Activated CD4-positive, alpha-beta memory T cell treated with anti-CD3 and anti-CD28 coated beads for 36 hours (primary cell): ENCODE measurements at regions of chr5 and their contacts with region 1.

Region 1: GRCh38 chr5:181191529-181192394 is 13.2 kb downstream of the TRIM7 start:
- DNase-seq: peak; percentile 98
- H3K4me3 Mint-ChIP-seq: peak overlapping the region; percentile 80
- H3K27ac Mint-ChIP-seq: peak overlapping the region; percentile 87
- H3K4me1 Mint-ChIP-seq: peaks cover 31% of the 10 kb centered on the region
- H3K27me3 Mint-ChIP-seq: peaks cover 11% of the 10 kb centered on the region

Region 2: GRCh38 chr5:180810210-180810958 is 381.4 kb before region 1 on chr5:
- CTCF ChIA-PET with region 1: no interaction called
- POLR2A ChIA-PET with region 1: no interaction called
- intact Hi-C with region 1: loop called (anchors 1 kb)
- DNase-seq: peak; percentile 97
- H3K4me3 Mint-ChIP-seq: peak overlapping the region; percentile 94
- H3K27ac Mint-ChIP-seq: peak overlapping the region; percentile 99
- H3K4me1 Mint-ChIP-seq: peaks cover 69% of the 10 kb centered on the region
- H3K27me3 Mint-ChIP-seq: no peaks in the 10 kb centered on the region

Region 3: GRCh38 chr5:180950291-180950949 is 241.3 kb before region 1 on chr5:
- CTCF ChIA-PET with region 1: no interaction called
- POLR2A ChIA-PET with region 1: no interaction called
- intact Hi-C with region 1: no loop called
- DNase-seq: no peak
- H3K4me3 Mint-ChIP-seq: no peak overlapping the region
- H3K27ac Mint-ChIP-seq: no peak overlapping the region
- H3K4me1 Mint-ChIP-seq: no peaks in the 10 kb centered on the region
- H3K27me3 Mint-ChIP-seq: no peaks in the 10 kb centered on the region

Region 4: DNA sequence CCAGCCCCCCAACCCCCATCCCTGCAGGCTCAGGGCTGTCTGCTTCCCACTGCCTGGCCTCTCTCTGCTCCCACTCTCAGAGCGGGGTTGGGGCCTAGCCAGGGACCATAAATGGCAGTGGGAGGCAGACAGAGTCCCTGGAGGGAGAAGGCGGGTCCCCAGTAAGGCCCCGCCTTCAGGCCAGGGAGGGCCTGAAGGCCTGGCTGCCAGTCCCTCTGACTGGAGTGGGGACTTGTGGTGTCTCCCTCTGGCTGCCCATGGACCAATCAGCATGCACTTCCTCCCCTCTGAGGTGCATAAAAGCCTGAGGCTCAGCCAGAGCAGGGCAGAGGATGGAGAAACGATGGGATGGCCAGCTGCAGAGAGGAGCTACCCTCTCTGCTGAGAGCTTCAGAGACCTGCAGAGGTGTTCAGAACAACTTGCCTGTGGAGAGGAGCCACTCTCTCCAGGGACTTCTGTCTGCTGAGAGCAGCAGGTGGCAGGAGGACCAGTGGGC is 154.3 kb before region 1 on chr5:
- CTCF ChIA-PET with region 1: no interaction called
- POLR2A ChIA-PET with region 1: no interaction called
- intact Hi-C with region 1: no loop called
- DNase-seq: no peak
- H3K4me3 Mint-ChIP-seq: no peak overlapping the region
- H3K27ac Mint-ChIP-seq: no peak overlapping the region
- H3K4me1 Mint-ChIP-seq: no peaks in the 10 kb centered on the region
- H3K27me3 Mint-ChIP-seq: peaks cover 18% of the 10 kb centered on the region

Region 5: DNA sequence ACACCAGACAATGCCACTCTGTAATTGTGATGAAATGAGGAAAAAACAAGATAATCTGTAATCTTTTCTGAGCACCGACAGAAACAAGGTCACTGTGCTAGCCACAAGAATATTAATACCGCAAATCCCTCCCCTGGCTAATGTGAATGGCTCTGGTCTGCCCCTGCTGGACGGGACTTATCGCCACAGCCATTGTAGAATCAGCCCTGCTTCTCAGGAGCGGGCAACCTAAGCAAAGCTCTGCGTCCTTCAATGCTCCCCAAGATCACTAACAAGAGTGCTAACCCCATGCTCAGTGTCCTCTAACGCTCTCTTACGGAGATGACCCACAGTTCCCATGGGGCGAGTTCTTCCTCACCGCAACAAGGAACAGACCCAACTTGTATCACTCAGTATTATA is 103.5 kb before region 1 on chr5:
- CTCF ChIA-PET with region 1: no interaction called
- POLR2A ChIA-PET with region 1: no interaction called
- intact Hi-C with region 1: no loop called
- DNase-seq: no peak
- H3K4me3 Mint-ChIP-seq: no peak overlapping the region
- H3K27ac Mint-ChIP-seq: no peak overlapping the region
- H3K4me1 Mint-ChIP-seq: no peaks in the 10 kb centered on the region
- H3K27me3 Mint-ChIP-seq: peaks cover 25% of the 10 kb centered on the region

Region 6: DNA sequence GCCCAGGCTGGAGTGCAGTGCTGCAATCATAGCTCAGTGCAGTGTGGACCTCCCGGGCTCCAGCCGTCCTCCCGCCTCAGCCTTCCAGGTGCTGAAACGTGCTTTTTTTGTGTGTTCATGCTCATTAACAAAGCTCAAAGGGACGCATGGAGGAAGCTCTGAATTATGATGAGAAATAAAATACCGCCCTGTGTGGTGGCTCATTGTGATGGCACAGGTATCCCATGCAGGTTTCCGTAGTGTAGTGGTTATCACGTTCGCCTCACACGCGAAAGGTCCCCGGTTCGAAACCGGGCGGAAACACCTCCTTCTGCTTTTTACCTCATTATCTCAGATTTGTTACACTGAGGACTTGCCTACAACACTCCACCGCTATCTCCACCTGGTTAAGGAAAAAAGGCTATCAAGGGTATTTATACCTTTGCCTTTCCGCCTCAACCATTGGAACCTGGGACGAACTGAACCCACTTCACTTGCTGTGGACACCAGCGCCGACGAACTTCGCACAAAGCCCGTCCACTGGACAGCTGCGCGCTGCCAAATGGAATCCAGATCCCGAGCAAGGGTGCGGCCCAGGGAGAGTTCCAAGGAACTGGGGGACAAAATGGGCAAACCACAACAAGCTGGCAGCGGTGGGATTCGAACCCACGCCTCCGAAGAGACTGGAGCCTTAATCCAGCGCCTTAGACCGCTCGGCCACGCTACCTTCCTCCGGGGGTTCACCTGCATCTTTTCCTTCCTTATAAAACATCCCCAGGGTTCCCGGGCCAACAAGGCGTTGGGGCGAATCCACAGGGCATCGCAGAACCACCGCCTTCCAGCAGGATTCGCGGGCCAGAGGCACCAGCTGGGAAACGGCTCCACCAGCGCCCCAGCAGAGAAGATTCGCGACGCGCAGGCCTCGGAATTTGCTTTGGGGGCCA is 18.1 kb before region 1 on chr5:
- CTCF ChIA-PET with region 1: no interaction called
- POLR2A ChIA-PET with region 1: interaction called, 5 read pairs
- intact Hi-C with region 1: loop called (anchors 2 kb)
- DNase-seq: peak; percentile 86
- H3K4me3 Mint-ChIP-seq: peak overlapping the region; percentile 86
- H3K27ac Mint-ChIP-seq: peak overlapping the region; percentile 80
- H3K4me1 Mint-ChIP-seq: peaks cover 36% of the 10 kb centered on the region
- H3K27me3 Mint-ChIP-seq: peaks cover 57% of the 10 kb centered on the region

Region 7: DNA sequence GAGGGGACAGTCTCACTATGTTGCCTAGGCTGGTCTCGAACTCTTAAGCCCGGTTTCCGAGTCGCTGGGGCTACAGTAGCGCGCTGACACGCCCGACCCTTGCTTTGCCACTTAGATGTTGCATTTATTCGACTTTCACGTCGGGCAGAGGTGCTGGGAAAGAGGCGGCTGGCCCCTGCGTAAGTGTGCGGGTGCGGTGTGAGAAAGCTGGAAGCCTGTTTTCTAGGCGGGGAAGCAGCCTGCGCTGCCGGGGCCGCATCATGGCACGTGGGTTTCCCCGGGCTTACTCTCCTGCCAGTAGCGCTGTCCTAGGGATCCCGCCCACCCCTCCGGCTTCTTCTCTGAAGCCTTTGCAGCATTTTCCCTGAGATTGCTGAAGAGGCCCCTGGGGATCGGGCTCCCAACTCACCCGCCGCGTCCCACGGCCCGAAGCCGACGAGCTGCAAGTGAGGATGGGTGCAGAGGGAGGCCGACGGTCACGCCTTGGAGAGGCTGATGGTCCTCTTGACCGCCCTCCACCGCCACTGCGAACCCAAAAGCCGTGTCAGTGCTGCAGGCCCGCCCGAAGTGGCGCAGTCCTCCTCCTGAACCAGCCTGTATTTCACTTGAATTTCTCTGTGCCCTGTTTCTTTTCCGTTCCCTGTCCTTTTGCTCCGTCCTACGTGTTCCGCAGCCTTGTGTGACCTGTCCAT is 25.5 kb after region 1 on chr5:
- CTCF ChIA-PET with region 1: interaction called, 16 read pairs
- POLR2A ChIA-PET with region 1: interaction called, 13 read pairs
- intact Hi-C with region 1: loop called (anchors 1 kb)
- DNase-seq: peak; percentile 76
- H3K4me3 Mint-ChIP-seq: peak overlapping the region; percentile 78
- H3K27ac Mint-ChIP-seq: peak overlapping the region; percentile 72
- H3K4me1 Mint-ChIP-seq: peaks cover 42% of the 10 kb centered on the region
- H3K27me3 Mint-ChIP-seq: peaks cover 8% of the 10 kb centered on the region

Region 8: DNA sequence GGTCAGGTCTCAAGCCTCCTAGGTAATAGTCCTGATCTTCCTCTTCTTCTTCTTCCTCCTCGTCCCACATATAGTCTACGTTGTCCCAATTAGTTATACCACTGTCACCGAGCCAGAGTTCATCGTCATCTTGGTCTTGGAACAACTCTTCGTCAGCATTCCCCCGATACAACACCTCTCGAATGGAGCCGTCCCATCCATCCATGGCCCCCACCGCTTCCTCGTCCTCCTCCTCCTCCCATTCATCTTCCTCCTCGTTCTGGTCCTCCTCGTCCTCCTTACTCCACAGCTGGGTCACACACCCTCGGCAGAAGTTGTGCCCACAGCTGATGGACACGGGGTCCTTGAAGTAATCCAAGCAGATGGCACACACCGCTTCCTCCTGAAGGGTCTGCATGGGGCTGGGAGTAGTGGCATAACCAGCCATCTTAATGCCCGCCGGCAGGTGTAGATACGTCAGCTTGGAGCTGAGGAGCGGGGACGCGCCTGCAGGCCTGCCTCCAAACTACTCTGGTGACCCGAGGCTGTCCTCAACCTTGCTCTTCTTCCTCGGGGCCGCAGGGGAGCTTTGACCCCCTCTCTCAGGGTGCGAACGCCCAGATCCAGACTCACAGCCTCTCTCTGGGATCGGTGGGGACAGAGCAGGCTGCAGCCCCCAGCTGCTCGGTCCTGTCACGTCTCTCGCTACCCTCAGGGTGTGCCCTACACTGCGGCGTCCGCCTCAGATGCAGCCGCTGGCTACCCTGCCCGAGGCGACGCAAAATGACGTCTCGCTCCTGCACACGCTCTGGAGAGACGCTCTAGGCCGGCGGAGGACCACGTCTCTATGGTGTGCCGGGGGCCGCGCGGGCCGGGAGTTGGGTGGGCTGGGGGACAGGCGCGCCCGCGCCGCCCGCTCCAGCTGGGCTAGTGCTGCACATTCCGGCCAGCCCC is 68.9 kb after region 1 on chr5 and contains the start of gene TRIM52:
- CTCF ChIA-PET with region 1: interaction called, 6 read pairs
- POLR2A ChIA-PET with region 1: interaction called, 33 read pairs
- intact Hi-C with region 1: loop called (anchors 1 kb)
- DNase-seq: peak; percentile 93
- H3K4me3 Mint-ChIP-seq: peak within 1 kb of the TSS; percentile 96
- H3K27ac Mint-ChIP-seq: peak within 1 kb of the TSS; percentile 97
- H3K4me1 Mint-ChIP-seq: peaks cover 39% of the 10 kb centered on the region
- H3K27me3 Mint-ChIP-seq: no peaks in the 10 kb centered on the region
- total RNA-seq, gene TRIM52: 10.9 to 11.7 TPM